HepG2 (cell line): ENCODE measurements at regions of chr10 and their contacts with region 1.

Region 1: GRCh38 chr10:118241229-118242137 is 100.6 kb downstream of the FAM204A start:
- DNase-seq: peak; percentile 61
- ATAC-seq: peak; percentile 75
- H3K4me3 ChIP-seq: no peak overlapping the region
- H3K27ac ChIP-seq: no peak overlapping the region
- H3K4me1 ChIP-seq: no peaks in the 10 kb centered on the region
- H3K27me3 ChIP-seq: peaks cover 0 to 48% of the 10 kb centered on the region in 2 experiments; a peak in 3 of 5 replicates
- CTCF ChIP-seq: peak; percentile 95
- EP300 ChIP-seq: no peak
- POLR2A ChIP-seq: no peak
- RAD21 ChIP-seq: peak; percentile 64

Region 2: GRCh38 chr10:117442944-117443685 is 798.4 kb before region 1 on chr10:
- CTCF ChIA-PET with region 1: interaction called, 4 read pairs
- POLR2A ChIA-PET with region 1: no interaction called
- in situ Hi-C with region 1: no loop called
- intact Hi-C with region 1: loop called (anchors 1 kb)
- DNase-seq: peak; percentile 41
- ATAC-seq: peak; percentile 92
- H3K4me3 ChIP-seq: no peak overlapping the region
- H3K27ac ChIP-seq: no peak overlapping the region
- H3K4me1 ChIP-seq: peaks cover under 1% of the 10 kb centered on the region
- H3K27me3 ChIP-seq: no peaks in the 10 kb centered on the region
- CTCF ChIP-seq: peak; percentile 83
- EP300 ChIP-seq: no peak
- POLR2A ChIP-seq: no peak
- RAD21 ChIP-seq: peak; percentile 56

Region 3: DNA sequence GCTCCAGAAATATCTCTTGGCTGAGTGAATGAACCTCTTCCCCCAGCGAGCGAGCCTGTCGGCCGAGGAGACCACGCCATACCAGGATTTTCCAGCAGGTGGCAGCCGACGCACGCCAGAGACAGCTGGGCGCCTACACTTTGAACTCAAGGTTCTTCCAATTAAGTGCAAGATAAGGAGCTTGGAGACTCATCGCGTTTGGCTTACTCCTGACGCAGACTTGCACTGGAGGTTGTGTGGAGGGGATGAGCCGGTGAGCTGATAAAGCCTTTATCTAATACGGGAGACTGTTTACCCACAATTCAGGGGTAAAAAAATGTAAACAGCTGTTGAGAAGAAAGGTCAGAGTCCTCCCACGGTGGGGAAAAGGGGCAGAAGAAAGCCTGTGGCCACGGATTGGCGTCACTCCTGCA is 744.9 kb before region 1 on chr10:
- CTCF ChIA-PET with region 1: interaction called, 18 read pairs
- POLR2A ChIA-PET with region 1: no interaction called
- in situ Hi-C with region 1: no loop called
- intact Hi-C with region 1: no loop called
- DNase-seq: peak; percentile 60
- ATAC-seq: peak; percentile 75
- H3K4me3 ChIP-seq: peak overlapping the region in 1 of 3 experiments; percentile 17; a peak in 1 of 6 replicates
- H3K27ac ChIP-seq: peak overlapping the region; percentile 21
- H3K4me1 ChIP-seq: peaks cover 28% of the 10 kb centered on the region
- H3K27me3 ChIP-seq: 0 out of 5 replicates have a peak, but pooled peaks cover 0 to 5% of the 10 kb centered on the region in 2 experiments
- CTCF ChIP-seq: peak; percentile 91
- EP300 ChIP-seq: no peak; a peak in 2 of 4 replicates
- POLR2A ChIP-seq: no peak
- RAD21 ChIP-seq: peak; percentile 70

Region 4: DNA sequence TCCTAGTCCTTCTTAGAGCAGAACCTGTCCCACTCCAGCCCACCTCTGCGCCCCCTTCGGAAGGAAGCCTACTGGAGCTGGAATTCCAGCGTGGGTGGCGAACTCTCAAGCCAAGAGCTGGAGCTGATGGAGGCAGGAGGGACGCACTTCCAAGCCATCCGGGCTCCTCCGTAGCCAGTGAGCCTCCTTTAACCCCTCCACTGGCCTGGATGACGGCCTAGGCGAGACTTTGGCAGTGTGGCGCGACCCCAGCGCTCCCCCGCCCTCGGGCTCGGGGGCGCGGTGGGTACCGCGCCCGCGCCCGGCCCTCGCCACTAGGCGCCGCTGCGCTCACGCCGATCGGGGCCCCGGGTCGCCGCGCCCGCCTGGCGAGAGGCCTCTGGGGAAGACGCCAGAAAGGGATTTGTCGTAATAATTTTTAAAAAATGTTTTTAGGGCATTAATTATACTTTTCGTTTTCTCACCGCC is 704.0 kb before region 1 on chr10:
- CTCF ChIA-PET with region 1: interaction called, 19 read pairs
- POLR2A ChIA-PET with region 1: no interaction called
- in situ Hi-C with region 1: loop called (anchors 5 kb)
- intact Hi-C with region 1: loop called (anchors 1 kb)
- DNase-seq: no peak
- ATAC-seq: peak; percentile 78
- H3K4me3 ChIP-seq: peak overlapping the region in 1 of 3 experiments; percentile 50; a peak in 1 of 6 replicates
- H3K27ac ChIP-seq: no peak overlapping the region
- H3K4me1 ChIP-seq: 0 out of 2 replicates have a peak, but pooled peaks cover 17% of the 10 kb centered on the region
- H3K27me3 ChIP-seq: peaks cover 14 to 93% of the 10 kb centered on the region in 2 experiments
- CTCF ChIP-seq: peak; percentile 63; the same call in 1 of the 2 replicates
- EP300 ChIP-seq: no peak
- POLR2A ChIP-seq: no peak
- RAD21 ChIP-seq: peak; percentile 79

Region 5: DNA sequence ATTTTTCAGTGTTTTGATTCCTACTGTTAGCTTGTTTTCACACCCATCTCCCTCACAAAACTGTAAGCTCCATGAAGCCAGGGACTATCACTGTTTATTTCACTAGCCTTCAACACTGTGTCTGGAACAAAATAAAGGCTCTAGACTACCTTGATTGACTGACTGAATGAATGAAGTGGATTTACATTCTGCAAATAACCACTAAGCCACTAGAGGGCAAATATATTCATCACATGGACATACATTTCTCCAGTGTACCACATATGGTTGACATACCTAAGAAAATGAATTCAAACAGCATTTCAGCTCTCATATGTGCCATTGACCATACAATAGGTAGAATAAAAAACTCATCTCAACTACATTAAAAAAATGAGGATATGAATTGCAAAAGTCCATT is 380.7 kb before region 1 on chr10:
- CTCF ChIA-PET with region 1: interaction called, 9 read pairs
- POLR2A ChIA-PET with region 1: no interaction called
- in situ Hi-C with region 1: loop called (anchors 10 kb)
- intact Hi-C with region 1: no loop called
- DNase-seq: peak; percentile 15
- ATAC-seq: peak; percentile 59
- H3K4me3 ChIP-seq: no peak overlapping the region
- H3K27ac ChIP-seq: no peak overlapping the region
- H3K4me1 ChIP-seq: no peaks in the 10 kb centered on the region
- H3K27me3 ChIP-seq: peaks cover 0 to 5% of the 10 kb centered on the region in 2 experiments; a peak in 1 of 5 replicates
- CTCF ChIP-seq: peak; percentile 29; the same call in 1 of the 2 replicates
- EP300 ChIP-seq: no peak
- POLR2A ChIP-seq: no peak
- RAD21 ChIP-seq: 0 out of 2 replicates have a peak, but pooled peaks have one; percentile 11

Region 6: GRCh38 chr10:118106426-118106825 is 135.1 kb before region 1 on chr10:
- CTCF ChIA-PET with region 1: no interaction called
- POLR2A ChIA-PET with region 1: no interaction called
- in situ Hi-C with region 1: no loop called
- intact Hi-C with region 1: loop called (anchors 5 kb)
- DNase-seq: peak; percentile 20
- ATAC-seq: peak; percentile 58
- H3K4me3 ChIP-seq: no peak overlapping the region
- H3K27ac ChIP-seq: no peak overlapping the region
- H3K4me1 ChIP-seq: no peaks in the 10 kb centered on the region
- H3K27me3 ChIP-seq: no peaks in the 10 kb centered on the region; a peak in 1 of 5 replicates
- CTCF ChIP-seq: peak; percentile 59
- EP300 ChIP-seq: no peak
- POLR2A ChIP-seq: no peak
- RAD21 ChIP-seq: 0 out of 2 replicates have a peak, but pooled peaks have one; percentile 23

Region 7: GRCh38 chr10:118423800-118424479 is 182.5 kb after region 1 on chr10:
- CTCF ChIA-PET with region 1: no interaction called
- POLR2A ChIA-PET with region 1: no interaction called
- in situ Hi-C with region 1: no loop called
- intact Hi-C with region 1: loop called (anchors 10 kb)
- DNase-seq: peak; percentile 89
- ATAC-seq: peak; percentile 100
- H3K4me3 ChIP-seq: no peak overlapping the region
- H3K27ac ChIP-seq: no peak overlapping the region
- H3K4me1 ChIP-seq: no peaks in the 10 kb centered on the region
- H3K27me3 ChIP-seq: peaks cover 0 to 5% of the 10 kb centered on the region in 2 experiments; a peak in 1 of 5 replicates
- CTCF ChIP-seq: peak; percentile 81
- EP300 ChIP-seq: no peak
- POLR2A ChIP-seq: no peak
- RAD21 ChIP-seq: peak; percentile 70